CD8-positive, alpha-beta T cell (primary cell): ENCODE measurements at regions of chr6 and their contacts with region 1.

Region 1: GRCh38 chr6:5584078-5584482 is 322.8 kb downstream of the FARS2 start:
- DNase-seq: no peak
- ATAC-seq: no peak
- H3K4me3 ChIP-seq: no peak overlapping the region
- H3K4me3 Mint-ChIP-seq: no peak overlapping the region
- H3K27ac ChIP-seq: no peak overlapping the region
- H3K27ac Mint-ChIP-seq: peak overlapping the region; percentile 69
- H3K4me1 ChIP-seq: peaks cover 14% of the 10 kb centered on the region
- H3K4me1 Mint-ChIP-seq: peaks cover 29% of the 10 kb centered on the region
- H3K27me3 ChIP-seq: no peaks in the 10 kb centered on the region
- H3K27me3 Mint-ChIP-seq: no peaks in the 10 kb centered on the region
- CTCF ChIP-seq: no peak

Region 2: DNA sequence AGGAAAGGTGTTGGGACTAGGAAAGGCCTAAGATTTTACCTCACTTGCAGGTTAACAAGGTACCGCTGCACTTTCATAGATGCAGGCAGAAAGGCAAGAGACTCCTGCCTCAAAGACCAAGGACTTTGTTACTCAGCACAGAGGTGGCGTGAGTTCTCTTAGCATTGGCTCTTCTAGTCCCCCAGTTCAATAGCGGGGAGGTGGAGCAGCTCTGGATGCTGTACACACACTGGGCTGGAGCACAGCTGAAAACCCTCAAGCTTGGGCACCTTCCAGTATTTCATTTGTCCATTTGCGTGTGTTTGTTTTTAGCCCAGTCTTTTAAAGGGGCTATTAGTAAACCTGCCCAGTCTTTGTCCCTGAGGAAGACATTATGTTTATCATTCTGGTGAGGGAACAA is 22.5 kb after region 1 on chr6:
- CTCF ChIA-PET with region 1: no interaction called
- POLR2A ChIA-PET with region 1: no interaction called
- intact Hi-C with region 1: no loop called
- DNase-seq: no peak
- ATAC-seq: no peak
- H3K4me3 ChIP-seq: no peak overlapping the region
- H3K4me3 Mint-ChIP-seq: no peak overlapping the region
- H3K27ac ChIP-seq: no peak overlapping the region
- H3K27ac Mint-ChIP-seq: no peak overlapping the region
- H3K4me1 ChIP-seq: no peaks in the 10 kb centered on the region
- H3K4me1 Mint-ChIP-seq: peaks cover 14% of the 10 kb centered on the region
- H3K27me3 ChIP-seq: no peaks in the 10 kb centered on the region
- H3K27me3 Mint-ChIP-seq: no peaks in the 10 kb centered on the region
- CTCF ChIP-seq: no peak

Region 3: GRCh38 chr6:5619249-5619648 is 35.2 kb after region 1 on chr6:
- CTCF ChIA-PET with region 1: no interaction called
- POLR2A ChIA-PET with region 1: no interaction called
- intact Hi-C with region 1: loop called in 1 of 2 experiments (anchors 5 kb)
- DNase-seq: peak; percentile 5 to 73 (median 49)
- ATAC-seq: peak; percentile 99
- H3K4me3 ChIP-seq: peak overlapping the region in 1 of 2 experiments; percentile 26
- H3K4me3 Mint-ChIP-seq: peak overlapping the region; percentile 45
- H3K27ac ChIP-seq: peak overlapping the region; percentile 49 to 65
- H3K27ac Mint-ChIP-seq: peak overlapping the region; percentile 89
- H3K4me1 ChIP-seq: peaks cover 15% of the 10 kb centered on the region
- H3K4me1 Mint-ChIP-seq: peaks cover 31% of the 10 kb centered on the region
- H3K27me3 ChIP-seq: no peaks in the 10 kb centered on the region
- H3K27me3 Mint-ChIP-seq: no peaks in the 10 kb centered on the region
- CTCF ChIP-seq: no peak

Region 4: DNA sequence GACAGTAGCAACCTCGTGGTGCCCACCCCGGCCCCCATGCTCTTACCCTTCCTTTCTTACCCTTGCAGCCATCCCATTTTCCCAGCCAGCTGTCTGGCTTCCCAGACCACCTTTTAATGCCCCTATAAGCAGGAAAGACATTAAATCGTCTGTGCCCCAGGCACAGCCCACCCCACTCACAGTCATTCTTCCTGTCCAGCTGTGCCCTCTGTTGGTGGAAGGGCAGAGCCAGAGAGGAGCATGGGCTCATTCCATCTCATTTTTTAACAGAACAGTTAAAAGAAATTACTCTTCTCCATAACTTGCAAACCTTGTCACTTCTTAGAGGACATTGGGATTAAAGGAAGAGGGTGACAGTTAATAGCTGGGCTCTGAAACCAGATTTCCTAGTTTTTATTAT is 182.2 kb after region 1 on chr6:
- CTCF ChIA-PET with region 1: no interaction called
- POLR2A ChIA-PET with region 1: no interaction called
- intact Hi-C with region 1: loop called in 1 of 2 experiments (anchors 1 kb)
- DNase-seq: peak in 1 of 9 experiments; percentile 41
- ATAC-seq: no peak
- H3K4me3 ChIP-seq: no peak overlapping the region
- H3K4me3 Mint-ChIP-seq: no peak overlapping the region
- H3K27ac ChIP-seq: no peak overlapping the region
- H3K27ac Mint-ChIP-seq: no peak overlapping the region
- H3K4me1 ChIP-seq: no peaks in the 10 kb centered on the region
- H3K4me1 Mint-ChIP-seq: peaks cover 16% of the 10 kb centered on the region
- H3K27me3 ChIP-seq: no peaks in the 10 kb centered on the region
- H3K27me3 Mint-ChIP-seq: no peaks in the 10 kb centered on the region
- CTCF ChIP-seq: no peak

Region 5: DNA sequence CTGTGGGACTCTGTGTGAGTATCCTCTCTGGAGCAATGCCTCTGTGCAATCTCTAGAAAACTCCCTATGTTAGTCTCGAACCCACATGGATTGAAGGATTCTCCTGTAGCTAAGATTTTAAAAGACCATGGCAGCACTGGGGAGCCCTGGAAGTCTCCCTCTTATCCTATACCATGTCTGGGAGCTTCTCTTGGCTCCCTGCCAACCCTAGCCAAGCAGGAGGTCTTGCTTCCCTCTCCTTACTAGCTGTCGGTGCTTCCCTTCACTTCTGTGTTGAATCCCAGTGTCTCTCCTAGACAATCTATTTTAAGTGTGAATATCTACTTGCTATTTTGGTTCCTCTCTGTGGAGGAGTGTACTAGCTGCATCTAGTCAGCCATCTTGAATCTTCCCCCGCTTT is 541.4 kb after region 1 on chr6:
- CTCF ChIA-PET with region 1: no interaction called
- POLR2A ChIA-PET with region 1: no interaction called
- intact Hi-C with region 1: no loop called
- DNase-seq: no peak
- ATAC-seq: no peak
- H3K4me3 ChIP-seq: no peak overlapping the region
- H3K4me3 Mint-ChIP-seq: no peak overlapping the region
- H3K27ac ChIP-seq: no peak overlapping the region
- H3K27ac Mint-ChIP-seq: no peak overlapping the region
- H3K4me1 ChIP-seq: no peaks in the 10 kb centered on the region
- H3K4me1 Mint-ChIP-seq: no peaks in the 10 kb centered on the region
- H3K27me3 ChIP-seq: no peaks in the 10 kb centered on the region
- H3K27me3 Mint-ChIP-seq: peaks cover 12% of the 10 kb centered on the region
- CTCF ChIP-seq: no peak